ENCODE measurements at regions of chr19 and their contacts with region 1.

Region 1: GRCh38 chr19:49929611-49930482 is 543 bp upstream of the NUP62 start:
- DNase-seq: peak; percentile 83 to 98 (median 91)
- ATAC-seq: peak; percentile 89
- H3K4me3 ChIP-seq: peak overlapping the region; percentile 90 to 100
- H3K4me3 Mint-ChIP-seq: peak overlapping the region; percentile 98
- H3K27ac ChIP-seq: peak overlapping the region; percentile 83 to 97
- H3K27ac Mint-ChIP-seq: peak overlapping the region; percentile 96
- H3K4me1 ChIP-seq: peaks cover 35% of the 10 kb centered on the region
- H3K4me1 Mint-ChIP-seq: peaks cover 65% of the 10 kb centered on the region
- H3K27me3 ChIP-seq: no peaks in the 10 kb centered on the region
- H3K27me3 Mint-ChIP-seq: no peaks in the 10 kb centered on the region
- CTCF ChIP-seq: no peak

Region 2: GRCh38 chr19:49487277-49488045 is 442.4 kb before region 1 on chr19 and contains the start of gene RPL13A:
- CTCF ChIA-PET with region 1: no interaction called
- POLR2A ChIA-PET with region 1: no interaction called
- intact Hi-C with region 1: no loop called
- DNase-seq: peak; percentile 99 to 100 (median 99)
- ATAC-seq: peak; percentile 85
- H3K4me3 ChIP-seq: peak within 1 kb of the TSS; percentile 93 to 96
- H3K4me3 Mint-ChIP-seq: peak within 1 kb of the TSS; percentile 97
- H3K27ac ChIP-seq: peak within 1 kb of the TSS; percentile 91
- H3K27ac Mint-ChIP-seq: peak within 1 kb of the TSS; percentile 92
- H3K4me1 ChIP-seq: peaks cover 39% of the 10 kb centered on the region
- H3K4me1 Mint-ChIP-seq: peaks cover 50% of the 10 kb centered on the region
- H3K27me3 ChIP-seq: no peaks in the 10 kb centered on the region
- H3K27me3 Mint-ChIP-seq: no peaks in the 10 kb centered on the region
- CTCF ChIP-seq: no peak
- total RNA-seq, gene RPL13A: 5,165 to 5,323 TPM

Region 3: DNA sequence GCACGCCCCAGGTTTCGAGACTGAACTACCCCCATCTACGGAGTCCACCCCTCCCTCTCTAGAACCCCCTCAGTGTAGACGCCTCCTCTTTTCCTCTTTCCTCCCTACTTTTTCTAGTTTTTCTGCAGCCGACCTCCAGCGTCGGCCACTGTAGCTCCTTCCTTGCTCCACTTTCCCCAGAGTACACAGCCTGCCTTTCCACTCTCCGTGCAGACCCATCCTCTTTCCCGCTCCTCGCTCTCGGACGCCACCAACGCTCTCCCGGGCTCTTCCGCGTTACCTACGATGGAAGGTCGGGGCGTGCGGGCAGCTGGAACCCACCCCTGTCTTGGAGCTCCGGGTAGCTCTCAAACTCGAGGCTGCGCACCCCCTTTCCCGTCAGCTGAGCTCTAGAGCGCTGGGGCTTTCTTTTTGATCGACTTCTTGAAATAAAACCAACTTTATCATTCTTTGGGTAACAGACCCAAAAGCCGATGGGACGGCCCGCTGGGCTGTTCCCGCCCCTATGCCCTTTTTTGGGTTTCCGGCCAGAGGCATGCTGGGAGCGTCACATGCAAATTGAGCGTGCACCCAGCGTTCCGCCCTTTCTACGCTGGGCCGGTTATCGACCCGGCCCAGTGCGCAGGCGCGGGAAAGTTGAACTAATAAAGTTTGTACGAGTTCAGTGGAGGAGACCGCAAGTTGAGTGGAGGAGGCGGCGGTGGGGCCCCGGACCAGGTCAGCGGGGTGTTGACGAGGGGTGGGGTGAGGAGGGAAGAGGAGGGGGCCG is 264.3 kb before region 1 on chr19 and contains the starts of genes BCL2L12 and IRF3:
- CTCF ChIA-PET with region 1: no interaction called
- POLR2A ChIA-PET with region 1: interaction called, 3 read pairs
- intact Hi-C with region 1: loop called in 1 of 2 experiments (anchors 1 kb)
- DNase-seq: peak; percentile 98 to 100 (median 99)
- ATAC-seq: peak; percentile 80
- H3K4me3 ChIP-seq: peak within 1 kb of the TSS; percentile 86 to 95
- H3K4me3 Mint-ChIP-seq: peak within 1 kb of the TSS; percentile 99
- H3K27ac ChIP-seq: peak within 1 kb of the TSS; percentile 77 to 93
- H3K27ac Mint-ChIP-seq: peak within 1 kb of the TSS; percentile 99
- H3K4me1 ChIP-seq: peaks cover 29% of the 10 kb centered on the region
- H3K4me1 Mint-ChIP-seq: peaks cover 38% of the 10 kb centered on the region
- H3K27me3 ChIP-seq: no peaks in the 10 kb centered on the region
- H3K27me3 Mint-ChIP-seq: no peaks in the 10 kb centered on the region
- CTCF ChIP-seq: no peak
- total RNA-seq, gene BCL2L12: 13.1 to 14.7 TPM
- total RNA-seq, gene IRF3: 92.0 to 99.5 TPM

Region 4: GRCh38 chr19:49850473-49851342 is 79.1 kb before region 1 on chr19 and contains the start of gene PTOV1:
- CTCF ChIA-PET with region 1: no interaction called
- POLR2A ChIA-PET with region 1: interaction called, 10 read pairs
- intact Hi-C with region 1: no loop called
- DNase-seq: peak; percentile 73 to 94 (median 86)
- ATAC-seq: peak; percentile 87
- H3K4me3 ChIP-seq: peak within 1 kb of the TSS; percentile 98 to 99
- H3K4me3 Mint-ChIP-seq: peak within 1 kb of the TSS; percentile 93
- H3K27ac ChIP-seq: peak within 1 kb of the TSS; percentile 96 to 99
- H3K27ac Mint-ChIP-seq: peak within 1 kb of the TSS; percentile 96
- H3K4me1 ChIP-seq: peaks cover 30% of the 10 kb centered on the region
- H3K4me1 Mint-ChIP-seq: peaks cover 35% of the 10 kb centered on the region
- H3K27me3 ChIP-seq: no peaks in the 10 kb centered on the region
- H3K27me3 Mint-ChIP-seq: no peaks in the 10 kb centered on the region
- CTCF ChIP-seq: no peak
- total RNA-seq, gene PTOV1: 112 to 116 TPM

Region 5: GRCh38 chr19:49889687-49890348 is 40.0 kb before region 1 on chr19:
- CTCF ChIA-PET with region 1: interaction called, 5 read pairs
- POLR2A ChIA-PET with region 1: no interaction called
- intact Hi-C with region 1: loop called (anchors 1 to 2 kb)
- DNase-seq: peak; percentile 60 to 88 (median 77)
- ATAC-seq: peak; percentile 74
- H3K4me3 ChIP-seq: peak overlapping the region; percentile 56 to 63
- H3K4me3 Mint-ChIP-seq: peak overlapping the region; percentile 79
- H3K27ac ChIP-seq: no peak overlapping the region
- H3K27ac Mint-ChIP-seq: peak overlapping the region; percentile 52
- H3K4me1 ChIP-seq: peaks cover 6% of the 10 kb centered on the region
- H3K4me1 Mint-ChIP-seq: peaks cover 9% of the 10 kb centered on the region
- H3K27me3 ChIP-seq: no peaks in the 10 kb centered on the region
- H3K27me3 Mint-ChIP-seq: no peaks in the 10 kb centered on the region
- CTCF ChIP-seq: peak; percentile 89

Region 6: GRCh38 chr19:50025024-50025789 is 95.4 kb after region 1 on chr19 and contains the start of gene VRK3:
- CTCF ChIA-PET with region 1: no interaction called
- POLR2A ChIA-PET with region 1: interaction called, 3 read pairs
- intact Hi-C with region 1: loop called (anchors 1 kb)
- DNase-seq: peak; percentile 95 to 100 (median 97)
- ATAC-seq: peak; percentile 86
- H3K4me3 ChIP-seq: peak within 1 kb of the TSS; percentile 88 to 98
- H3K4me3 Mint-ChIP-seq: peak within 1 kb of the TSS; percentile 90
- H3K27ac ChIP-seq: peak within 1 kb of the TSS; percentile 98
- H3K27ac Mint-ChIP-seq: peak within 1 kb of the TSS; percentile 98
- H3K4me1 ChIP-seq: peaks cover 29% of the 10 kb centered on the region
- H3K4me1 Mint-ChIP-seq: peaks cover 53% of the 10 kb centered on the region
- H3K27me3 ChIP-seq: no peaks in the 10 kb centered on the region
- H3K27me3 Mint-ChIP-seq: no peaks in the 10 kb centered on the region
- CTCF ChIP-seq: no peak
- total RNA-seq, gene VRK3: 71.1 to 73.1 TPM